ENCODE measurements at regions of chr3 and their contacts with region 1.

Region 1: DNA sequence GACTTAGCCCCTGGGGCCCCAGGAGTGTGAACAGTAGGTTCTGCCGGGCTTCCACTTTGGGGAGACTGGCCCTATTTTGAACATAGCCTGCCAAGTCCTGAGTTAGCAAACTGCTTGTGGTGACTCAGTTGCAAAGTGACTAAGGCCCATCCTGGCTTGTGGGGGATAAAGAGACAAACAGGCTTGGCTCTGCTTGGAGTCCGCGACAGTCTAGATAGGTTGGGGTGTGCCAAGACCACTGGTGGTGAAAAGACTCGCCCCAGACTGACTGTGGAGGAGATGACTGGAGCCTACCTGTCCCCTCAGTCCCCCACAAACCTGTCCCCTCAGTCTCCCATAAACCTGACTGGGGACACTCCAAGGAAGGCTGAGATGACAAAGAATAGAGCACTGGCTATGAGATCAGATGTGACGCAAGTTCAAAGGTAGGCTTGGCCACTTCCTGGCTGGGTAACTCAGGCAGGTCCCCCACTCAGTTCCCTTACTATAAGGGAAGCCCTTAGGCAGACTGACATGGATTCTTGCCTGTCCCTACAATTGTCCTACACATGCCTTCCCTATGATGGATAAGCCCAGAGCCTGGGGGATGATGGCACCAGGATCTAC is 4.3 kb downstream of the DNASE1L3 start:
- DNase-seq: peak; percentile 16
- H3K4me3 ChIP-seq: no peak overlapping the region
- H3K27me3 ChIP-seq: peaks cover 3% of the 10 kb centered on the region; the same call in 1 of the 2 replicates
- CTCF ChIP-seq: no peak

Region 2: DNA sequence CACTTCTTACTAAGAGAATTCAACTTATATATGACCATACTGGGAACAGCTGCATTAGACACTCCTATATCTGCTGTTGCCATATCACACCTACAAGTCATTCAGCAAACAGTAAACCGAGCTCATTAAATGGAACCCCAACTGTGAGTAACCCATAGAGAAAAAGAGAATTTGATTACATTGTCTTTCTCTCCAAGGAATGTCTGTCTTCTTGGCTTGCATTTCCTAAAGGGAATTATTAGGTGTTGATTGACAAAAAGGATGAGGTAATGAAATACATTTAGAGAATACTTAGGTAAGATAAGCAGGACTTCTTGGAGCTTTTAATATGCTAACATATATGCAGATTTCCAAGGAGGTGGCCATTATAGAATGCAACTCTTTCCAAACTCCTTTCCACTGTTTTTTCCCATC is 373.6 kb before region 1 on chr3:
- CTCF ChIA-PET with region 1: no interaction called
- POLR2A ChIA-PET with region 1: interaction called, 19 read pairs
- DNase-seq: no peak
- H3K4me3 ChIP-seq: no peak overlapping the region
- H3K27me3 ChIP-seq: no peaks in the 10 kb centered on the region
- CTCF ChIP-seq: no peak

Region 3: DNA sequence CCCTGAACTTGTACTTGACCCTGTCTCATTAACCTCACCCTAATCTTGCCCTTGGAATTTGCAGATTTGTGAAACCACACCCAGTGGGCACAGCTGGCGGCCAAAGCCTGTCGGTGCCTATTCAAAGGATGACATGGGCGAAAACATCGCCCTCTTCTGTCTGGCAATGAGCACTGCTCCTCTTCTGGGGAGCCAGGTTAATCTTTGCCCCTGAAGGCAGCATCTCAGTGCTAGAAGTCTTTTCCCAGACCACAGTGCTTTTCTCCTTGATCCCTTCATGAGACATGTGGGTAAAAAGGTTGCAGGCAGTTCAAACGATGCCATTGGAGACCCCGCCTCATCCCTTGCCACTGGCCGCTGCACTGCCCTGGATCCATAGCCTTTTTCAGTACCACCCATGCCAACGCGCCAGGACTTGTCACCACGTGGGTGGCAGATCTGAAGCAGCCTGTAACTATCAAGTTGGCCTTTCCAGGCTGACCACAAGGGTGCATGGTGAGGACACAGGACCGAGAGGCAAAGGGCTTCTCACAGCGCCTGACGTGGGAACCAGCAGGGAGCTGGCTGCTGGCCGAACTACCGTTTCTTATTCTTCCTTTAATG is 10.8 kb after region 1 on chr3:
- CTCF ChIA-PET with region 1: interaction called, 34 read pairs
- POLR2A ChIA-PET with region 1: no interaction called
- DNase-seq: no peak
- H3K4me3 ChIP-seq: no peak overlapping the region
- H3K27me3 ChIP-seq: peaks cover 3% of the 10 kb centered on the region
- CTCF ChIP-seq: peak; percentile 86